ENCODE measurements at regions of chr4 and their contacts with region 1.

Region 1: GRCh38 chr4:16072168-16072567 is 11.7 kb downstream of the PROM1 start:
- DNase-seq: no peak
- ATAC-seq: no peak
- H3K4me3 ChIP-seq: no peak overlapping the region
- H3K27ac ChIP-seq: no peak overlapping the region
- H3K4me1 ChIP-seq: no peaks in the 10 kb centered on the region
- H3K27me3 ChIP-seq: peaks cover 0 to 5% (median 0%) of the 10 kb centered on the region in 7 donors
- CTCF ChIP-seq: no peak

Region 2: DNA sequence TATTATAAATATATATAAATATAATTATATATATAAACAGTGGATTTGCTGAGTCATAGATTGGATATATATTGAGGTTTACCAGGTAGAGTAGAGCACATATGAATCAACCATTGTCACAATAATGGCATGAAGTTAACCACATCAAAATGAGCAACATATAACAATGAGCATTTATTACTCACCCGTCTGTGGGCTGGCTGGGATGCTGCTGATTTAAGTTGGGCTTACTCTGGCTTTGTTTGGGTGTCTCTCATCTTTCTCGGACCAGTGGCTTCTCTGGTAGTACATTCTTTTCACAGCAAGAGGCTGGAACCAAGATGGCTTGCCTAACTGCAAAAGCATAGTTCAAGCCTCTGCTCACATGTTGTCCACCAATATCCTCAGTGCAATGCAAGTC is 265.8 kb after region 1 on chr4:
- intact Hi-C with region 1: no loop called
- DNase-seq: no peak
- ATAC-seq: no peak
- H3K4me3 ChIP-seq: no peak overlapping the region
- H3K27ac ChIP-seq: no peak overlapping the region
- H3K4me1 ChIP-seq: no peaks in the 10 kb centered on the region
- H3K27me3 ChIP-seq: no peaks in the 10 kb centered on the region
- CTCF ChIP-seq: no peak

Region 3: GRCh38 chr4:16686195-16686594 is 614.0 kb after region 1 on chr4:
- intact Hi-C with region 1: loop called in 1 of 10 experiments (anchors 5 kb)
- DNase-seq: no peak
- ATAC-seq: peak in 3 of 8 donors; percentile 27 to 52 (median 38)
- H3K4me3 ChIP-seq: no peak overlapping the region
- H3K27ac ChIP-seq: peak overlapping the region in 1 of 10 donors; percentile 30
- H3K4me1 ChIP-seq: peaks cover 0 to 40% (median 8%) of the 10 kb centered on the region in 9 donors
- H3K27me3 ChIP-seq: no peaks in the 10 kb centered on the region
- CTCF ChIP-seq: no peak

Measured in heart right ventricle (tissue), 16 donors.